Activated T-helper 1 cell treated with anti-CD3 and anti-CD28 coated beads, Interleukin-12 subunit alpha, Interleukin-12 subunit beta, Interleukin-2, Interleukin-4 antibody, amounts not matched to agents 30 ng/mL and 10 ng/mL and 1 ng/mL, durations not matched to agents 14 hours and 24 hours and 36 hours (primary cell): ENCODE measurements at regions of chr15 and their contacts with region 1.

Region 1: GRCh38 chr15:71730277-71731144 is 79.8 kb upstream of the NR2E3 start:
- DNase-seq: peak; percentile 5
- H3K4me3 Mint-ChIP-seq: no peak overlapping the region
- H3K27ac Mint-ChIP-seq: no peak overlapping the region
- H3K4me1 Mint-ChIP-seq: no peaks in the 10 kb centered on the region
- H3K27me3 Mint-ChIP-seq: peaks cover 2% of the 10 kb centered on the region

Region 2: DNA sequence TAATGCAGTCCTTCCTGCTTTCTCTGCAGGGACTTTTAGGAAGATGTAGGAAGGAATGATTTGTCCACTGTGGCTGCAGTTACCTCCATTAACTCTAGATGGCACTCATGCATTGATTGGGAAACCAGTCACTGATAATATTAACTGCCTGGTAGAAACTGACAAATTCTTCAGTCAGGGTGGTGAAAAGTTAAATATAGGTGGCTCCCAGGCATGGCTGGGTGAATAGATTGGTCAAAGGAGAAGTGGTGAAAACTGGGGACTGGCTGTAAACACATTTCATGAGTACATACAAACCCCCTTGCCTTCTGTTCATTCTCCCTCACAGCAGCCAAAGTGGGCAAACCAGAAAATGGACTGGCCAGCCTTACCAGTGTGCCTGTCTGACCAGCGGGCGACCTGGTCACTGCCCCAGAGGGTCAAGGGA is 281.8 kb before region 1 on chr15:
- intact Hi-C with region 1: loop called (anchors 2 kb)
- DNase-seq: no peak
- H3K4me3 Mint-ChIP-seq: no peak overlapping the region
- H3K27ac Mint-ChIP-seq: no peak overlapping the region
- H3K4me1 Mint-ChIP-seq: no peaks in the 10 kb centered on the region
- H3K27me3 Mint-ChIP-seq: peaks cover 2% of the 10 kb centered on the region

Region 3: GRCh38 chr15:71575474-71576045 is 155.0 kb before region 1 on chr15:
- intact Hi-C with region 1: loop called (anchors 1 kb)
- DNase-seq: no peak
- H3K4me3 Mint-ChIP-seq: no peak overlapping the region
- H3K27ac Mint-ChIP-seq: no peak overlapping the region
- H3K4me1 Mint-ChIP-seq: no peaks in the 10 kb centered on the region
- H3K27me3 Mint-ChIP-seq: peaks cover 22% of the 10 kb centered on the region

Region 4: GRCh38 chr15:71761649-71762369 is 31.3 kb after region 1 on chr15:
- intact Hi-C with region 1: no loop called
- DNase-seq: no peak
- H3K4me3 Mint-ChIP-seq: no peak overlapping the region
- H3K27ac Mint-ChIP-seq: no peak overlapping the region
- H3K4me1 Mint-ChIP-seq: no peaks in the 10 kb centered on the region
- H3K27me3 Mint-ChIP-seq: peaks cover 3% of the 10 kb centered on the region

Region 5: GRCh38 chr15:71825021-71825730 is 94.7 kb after region 1 on chr15:
- intact Hi-C with region 1: no loop called
- DNase-seq: no peak
- H3K4me3 Mint-ChIP-seq: no peak overlapping the region
- H3K27ac Mint-ChIP-seq: no peak overlapping the region
- H3K4me1 Mint-ChIP-seq: no peaks in the 10 kb centered on the region
- H3K27me3 Mint-ChIP-seq: no peaks in the 10 kb centered on the region